T-cell (primary cell): ENCODE measurements at regions of chr22 and their contacts with region 1.

Region 1: GRCh38 chr22:48403521-48404403 is 1423.9 kb downstream of the BRD1 start:
- DNase-seq: no peak
- ATAC-seq: no peak
- H3K4me3 ChIP-seq: no peak overlapping the region
- H3K4me3 Mint-ChIP-seq: no peak overlapping the region
- H3K27ac ChIP-seq: no peak overlapping the region
- H3K27ac Mint-ChIP-seq: no peak overlapping the region
- H3K4me1 ChIP-seq: no peaks in the 10 kb centered on the region
- H3K4me1 Mint-ChIP-seq: no peaks in the 10 kb centered on the region
- H3K27me3 ChIP-seq: no peaks in the 10 kb centered on the region
- H3K27me3 Mint-ChIP-seq: peaks cover 1 to 5% of the 10 kb centered on the region in 2 donors

Region 2: GRCh38 chr22:48161298-48161697 is 242.5 kb before region 1 on chr22:
- CTCF ChIA-PET with region 1: no interaction called
- POLR2A ChIA-PET with region 1: no interaction called
- DNase-seq: no peak
- ATAC-seq: no peak
- H3K4me3 ChIP-seq: no peak overlapping the region
- H3K4me3 Mint-ChIP-seq: no peak overlapping the region
- H3K27ac ChIP-seq: no peak overlapping the region
- H3K27ac Mint-ChIP-seq: no peak overlapping the region
- H3K4me1 ChIP-seq: no peaks in the 10 kb centered on the region
- H3K4me1 Mint-ChIP-seq: no peaks in the 10 kb centered on the region
- H3K27me3 ChIP-seq: peaks cover 0 to 3% of the 10 kb centered on the region in 2 experiments
- H3K27me3 Mint-ChIP-seq: peaks cover 0 to 10% of the 10 kb centered on the region in 2 donors

Region 3: DNA sequence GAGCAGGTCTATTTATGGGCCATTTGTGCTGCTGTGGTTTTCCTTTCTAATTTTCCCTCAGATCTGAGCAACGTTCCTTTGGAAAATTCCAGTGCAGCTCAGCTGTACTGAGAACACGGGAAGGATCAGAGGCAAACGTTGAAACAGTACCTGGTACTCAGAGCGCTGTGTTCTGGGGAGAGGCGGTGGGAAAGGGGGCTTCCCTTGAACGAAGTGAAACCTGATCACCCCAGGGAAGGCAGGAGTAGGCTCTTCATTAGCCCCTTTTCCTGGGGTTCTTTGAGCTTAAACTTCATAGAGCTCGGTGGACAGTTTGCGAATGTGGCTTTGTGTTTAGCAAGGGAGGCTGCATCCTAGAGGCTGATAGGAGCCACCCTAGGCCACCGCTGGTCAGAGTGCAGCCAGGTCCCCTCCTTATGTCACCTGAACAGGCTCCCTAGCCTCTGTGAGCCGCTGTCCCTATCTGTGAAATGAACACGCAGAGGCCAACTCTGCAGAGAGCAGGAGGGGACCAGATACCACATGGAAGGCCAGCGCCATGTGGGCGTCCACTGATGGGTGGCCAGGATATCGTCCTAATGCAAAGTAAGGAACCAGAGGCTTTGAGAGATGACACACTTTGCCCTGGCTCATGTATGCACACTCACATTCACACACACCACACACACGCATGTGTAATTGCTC is 40.9 kb before region 1 on chr22:
- CTCF ChIA-PET with region 1: no interaction called
- POLR2A ChIA-PET with region 1: no interaction called
- DNase-seq: no peak
- ATAC-seq: no peak
- H3K4me3 ChIP-seq: no peak overlapping the region
- H3K4me3 Mint-ChIP-seq: no peak overlapping the region
- H3K27ac ChIP-seq: no peak overlapping the region
- H3K27ac Mint-ChIP-seq: no peak overlapping the region
- H3K4me1 ChIP-seq: no peaks in the 10 kb centered on the region
- H3K4me1 Mint-ChIP-seq: no peaks in the 10 kb centered on the region
- H3K27me3 ChIP-seq: peaks cover 0 to 24% of the 10 kb centered on the region in 2 experiments
- H3K27me3 Mint-ChIP-seq: no peaks in the 10 kb centered on the region

Region 4: DNA sequence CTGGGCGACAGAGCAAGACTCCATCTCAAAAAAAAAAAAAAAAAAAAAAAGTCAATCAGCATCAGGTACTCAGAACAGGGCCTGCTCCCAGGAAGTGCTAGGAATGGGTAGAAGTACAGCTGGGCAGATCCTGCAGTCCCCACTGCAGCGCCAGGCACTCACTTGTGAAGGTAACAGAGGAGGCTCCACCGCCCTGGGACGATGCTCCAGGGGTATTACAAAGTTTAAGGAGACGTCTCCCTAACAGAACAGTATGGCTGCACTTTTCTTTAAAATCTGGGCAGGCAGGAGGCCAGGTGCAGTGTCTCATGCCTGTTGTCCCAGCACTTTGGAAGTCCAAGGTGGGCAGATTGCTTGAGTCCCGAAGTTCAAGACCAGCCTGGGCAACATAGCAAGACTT is 25.1 kb before region 1 on chr22:
- CTCF ChIA-PET with region 1: no interaction called
- POLR2A ChIA-PET with region 1: interaction called in 1 of 2 experiments, 13 read pairs
- DNase-seq: peak in 1 of 35 experiments; percentile 1
- ATAC-seq: no peak
- H3K4me3 ChIP-seq: no peak overlapping the region
- H3K4me3 Mint-ChIP-seq: no peak overlapping the region
- H3K27ac ChIP-seq: no peak overlapping the region
- H3K27ac Mint-ChIP-seq: no peak overlapping the region
- H3K4me1 ChIP-seq: no peaks in the 10 kb centered on the region
- H3K4me1 Mint-ChIP-seq: no peaks in the 10 kb centered on the region
- H3K27me3 ChIP-seq: peaks cover 0 to 22% of the 10 kb centered on the region in 2 experiments
- H3K27me3 Mint-ChIP-seq: peaks cover 9 to 17% of the 10 kb centered on the region in 2 donors